PC-3 (cell line): ENCODE measurements at regions of chr13 and their contacts with region 1.

Region 1: GRCh38 chr13:100197591-100198365 is 108.9 kb downstream of the PCCA start:
- DNase-seq: no peak
- ATAC-seq: no peak
- H3K4me3 ChIP-seq: no peak overlapping the region
- H3K27ac ChIP-seq: no peak overlapping the region
- H3K4me1 ChIP-seq: no peaks in the 10 kb centered on the region
- H3K27me3 ChIP-seq: no peaks in the 10 kb centered on the region
- CTCF ChIP-seq: no peak

Region 2: GRCh38 chr13:100163375-100163774 is 34.4 kb before region 1 on chr13:
- CTCF ChIA-PET with region 1: no interaction called
- POLR2A ChIA-PET with region 1: no interaction called
- intact Hi-C with region 1: loop called (anchors 5 kb)
- DNase-seq: no peak
- ATAC-seq: no peak
- H3K4me3 ChIP-seq: no peak overlapping the region
- H3K27ac ChIP-seq: no peak overlapping the region
- H3K4me1 ChIP-seq: no peaks in the 10 kb centered on the region
- H3K27me3 ChIP-seq: no peaks in the 10 kb centered on the region
- CTCF ChIP-seq: no peak

Region 3: DNA sequence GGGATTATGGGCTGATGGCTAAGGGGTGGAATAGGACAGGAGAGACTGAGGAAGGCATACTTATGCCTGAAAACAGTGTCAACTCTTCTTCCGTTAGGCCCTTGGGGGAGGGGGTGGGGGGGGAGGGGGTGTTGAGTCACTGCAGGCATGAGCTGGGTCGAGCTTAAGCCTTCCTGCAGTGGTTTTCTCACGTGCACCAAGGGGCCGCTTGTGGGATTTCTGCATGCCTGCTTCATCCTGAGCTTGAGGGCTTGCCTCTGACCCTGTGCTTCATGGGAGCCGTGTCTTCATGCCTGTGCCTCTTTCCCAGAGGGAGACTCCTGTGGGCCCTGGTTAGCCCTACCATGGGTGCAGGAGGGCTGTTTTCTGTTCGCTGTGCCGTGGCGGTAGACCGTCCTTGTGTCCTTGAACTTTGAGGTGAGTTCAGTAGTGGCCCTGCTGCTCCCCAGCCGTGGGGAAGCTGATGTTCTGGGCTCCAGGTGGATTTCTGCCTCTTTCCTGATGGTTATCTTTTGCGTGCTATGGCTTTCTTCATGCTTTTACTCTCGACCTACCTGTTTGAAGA is 77.2 kb after region 1 on chr13:
- CTCF ChIA-PET with region 1: no interaction called
- POLR2A ChIA-PET with region 1: no interaction called
- intact Hi-C with region 1: no loop called
- DNase-seq: no peak
- ATAC-seq: no peak
- H3K4me3 ChIP-seq: no peak overlapping the region
- H3K27ac ChIP-seq: no peak overlapping the region
- H3K4me1 ChIP-seq: no peaks in the 10 kb centered on the region
- H3K27me3 ChIP-seq: no peaks in the 10 kb centered on the region
- CTCF ChIP-seq: no peak

Region 4: DNA sequence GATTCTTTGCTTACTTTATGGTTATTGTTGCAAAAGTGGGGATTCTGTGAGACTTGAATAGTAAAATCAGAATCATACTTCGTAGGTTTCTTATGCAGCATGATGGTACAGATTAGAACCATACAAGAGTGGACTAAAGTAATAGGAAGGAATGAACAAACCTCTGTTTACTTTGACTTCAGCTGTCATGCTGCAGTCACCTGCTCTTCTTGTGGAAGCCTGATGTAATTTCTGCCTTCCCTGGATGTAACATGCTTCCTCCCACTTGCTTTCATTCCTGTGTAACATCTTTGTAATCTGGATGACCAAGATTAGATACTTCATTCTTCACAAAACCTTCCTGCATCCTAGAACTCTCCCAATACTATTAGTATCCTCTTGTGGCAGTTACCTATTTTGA is 126.2 kb after region 1 on chr13:
- CTCF ChIA-PET with region 1: no interaction called
- POLR2A ChIA-PET with region 1: no interaction called
- intact Hi-C with region 1: no loop called
- DNase-seq: no peak
- ATAC-seq: no peak
- H3K4me3 ChIP-seq: no peak overlapping the region
- H3K27ac ChIP-seq: no peak overlapping the region
- H3K4me1 ChIP-seq: no peaks in the 10 kb centered on the region
- H3K27me3 ChIP-seq: no peaks in the 10 kb centered on the region
- CTCF ChIP-seq: no peak

Region 5: GRCh38 chr13:100514788-100515409 is 317.1 kb after region 1 on chr13:
- CTCF ChIA-PET with region 1: no interaction called
- POLR2A ChIA-PET with region 1: no interaction called
- intact Hi-C with region 1: no loop called
- DNase-seq: peak; percentile 69
- ATAC-seq: peak; percentile 96
- H3K4me3 ChIP-seq: no peak overlapping the region
- H3K27ac ChIP-seq: no peak overlapping the region
- H3K4me1 ChIP-seq: peaks cover 4% of the 10 kb centered on the region; the same call in 1 of the 2 replicates
- H3K27me3 ChIP-seq: no peaks in the 10 kb centered on the region
- CTCF ChIP-seq: peak; percentile 91

Region 6: GRCh38 chr13:100803091-100803490 is 605.3 kb after region 1 on chr13:
- CTCF ChIA-PET with region 1: no interaction called
- POLR2A ChIA-PET with region 1: no interaction called
- intact Hi-C with region 1: no loop called
- DNase-seq: no peak
- ATAC-seq: no peak
- H3K4me3 ChIP-seq: no peak overlapping the region
- H3K27ac ChIP-seq: no peak overlapping the region
- H3K4me1 ChIP-seq: no peaks in the 10 kb centered on the region
- H3K27me3 ChIP-seq: peaks cover 29% of the 10 kb centered on the region
- CTCF ChIP-seq: no peak